Activated naive CD4-positive, alpha-beta T cell treated with anti-CD3 and anti-CD28 coated beads for 36 hours (primary cell): ENCODE measurements at regions of chr6 and their contacts with region 1.

Region 1: GRCh38 chr6:43723737-43724295 is 36.2 kb upstream of the MRPS18A start:
- DNase-seq: peak; percentile 90
- H3K4me3 Mint-ChIP-seq: peak overlapping the region; percentile 72
- H3K27ac Mint-ChIP-seq: no peak overlapping the region
- H3K4me1 Mint-ChIP-seq: peaks cover 23% of the 10 kb centered on the region
- H3K27me3 Mint-ChIP-seq: no peaks in the 10 kb centered on the region

Region 2: DNA sequence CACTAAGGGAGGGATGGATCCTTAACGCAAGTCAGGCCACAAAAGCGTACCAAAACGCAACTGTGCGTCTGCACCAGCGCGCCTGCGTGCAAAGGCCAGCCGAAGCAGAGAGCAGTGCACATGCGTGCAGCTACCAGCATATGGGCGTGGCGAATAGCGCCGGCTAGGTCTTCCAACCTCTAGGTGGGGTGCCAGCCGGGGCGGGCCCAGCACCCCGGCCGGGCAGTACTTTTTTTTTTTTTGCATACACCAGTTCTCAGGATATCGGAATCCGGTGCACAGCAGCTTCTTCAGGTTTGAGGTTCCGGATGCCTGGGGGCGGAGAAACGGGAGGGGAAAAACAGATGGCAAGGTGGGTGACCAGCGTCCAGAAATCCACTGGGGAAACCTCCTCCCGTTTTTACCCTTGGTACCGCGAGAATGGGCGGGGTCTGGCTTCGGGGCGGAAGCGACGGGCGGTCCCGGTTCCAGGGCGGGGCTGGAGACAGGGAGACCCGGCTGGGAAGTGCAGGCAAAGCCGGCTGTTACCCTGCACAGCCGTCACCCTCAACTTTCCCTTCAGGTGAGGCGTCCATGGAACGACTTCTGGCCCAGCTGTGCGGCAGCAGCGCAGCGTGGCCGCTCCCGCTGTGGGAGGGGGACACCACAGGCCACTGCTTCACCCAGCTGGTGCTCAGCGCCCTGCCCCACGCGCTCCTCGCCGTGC is 296.3 kb before region 1 on chr6 and contains the start of gene ABCC10:
- CTCF ChIA-PET with region 1: no interaction called
- intact Hi-C with region 1: no loop called
- DNase-seq: peak; percentile 97
- H3K4me3 Mint-ChIP-seq: peak within 1 kb of the TSS; percentile 87
- H3K27ac Mint-ChIP-seq: peak within 1 kb of the TSS; percentile 86
- H3K4me1 Mint-ChIP-seq: peaks cover 21% of the 10 kb centered on the region
- H3K27me3 Mint-ChIP-seq: no peaks in the 10 kb centered on the region
- total RNA-seq, gene ABCC10: 22.7 to 26.6 TPM

Region 3: GRCh38 chr6:43667245-43668150 is 56.3 kb before region 1 on chr6:
- CTCF ChIA-PET with region 1: interaction called, 5 read pairs
- intact Hi-C with region 1: loop called (anchors 1 kb)
- DNase-seq: peak; percentile 90
- H3K4me3 Mint-ChIP-seq: peak overlapping the region; percentile 5
- H3K27ac Mint-ChIP-seq: peak overlapping the region; percentile 65
- H3K4me1 Mint-ChIP-seq: peaks cover 22% of the 10 kb centered on the region
- H3K27me3 Mint-ChIP-seq: no peaks in the 10 kb centered on the region

Region 4: GRCh38 chr6:43687437-43688347 is 36.1 kb before region 1 on chr6 and contains the start of gene MRPS18A:
- CTCF ChIA-PET with region 1: no interaction called
- intact Hi-C with region 1: loop called (anchors 2 kb)
- DNase-seq: peak; percentile 90
- H3K4me3 Mint-ChIP-seq: peak within 1 kb of the TSS; percentile 92
- H3K27ac Mint-ChIP-seq: peak within 1 kb of the TSS; percentile 81
- H3K4me1 Mint-ChIP-seq: peaks cover 42% of the 10 kb centered on the region
- H3K27me3 Mint-ChIP-seq: peaks cover 3% of the 10 kb centered on the region
- total RNA-seq, gene MRPS18A: 47.8 to 50.2 TPM

Region 5: GRCh38 chr6:43758617-43759050 is 34.8 kb after region 1 on chr6:
- CTCF ChIA-PET with region 1: interaction called, 14 read pairs
- intact Hi-C with region 1: loop called (anchors 1 kb)
- DNase-seq: peak; percentile 62
- H3K4me3 Mint-ChIP-seq: no peak overlapping the region
- H3K27ac Mint-ChIP-seq: no peak overlapping the region
- H3K4me1 Mint-ChIP-seq: peaks cover 3% of the 10 kb centered on the region
- H3K27me3 Mint-ChIP-seq: no peaks in the 10 kb centered on the region

Region 6: DNA sequence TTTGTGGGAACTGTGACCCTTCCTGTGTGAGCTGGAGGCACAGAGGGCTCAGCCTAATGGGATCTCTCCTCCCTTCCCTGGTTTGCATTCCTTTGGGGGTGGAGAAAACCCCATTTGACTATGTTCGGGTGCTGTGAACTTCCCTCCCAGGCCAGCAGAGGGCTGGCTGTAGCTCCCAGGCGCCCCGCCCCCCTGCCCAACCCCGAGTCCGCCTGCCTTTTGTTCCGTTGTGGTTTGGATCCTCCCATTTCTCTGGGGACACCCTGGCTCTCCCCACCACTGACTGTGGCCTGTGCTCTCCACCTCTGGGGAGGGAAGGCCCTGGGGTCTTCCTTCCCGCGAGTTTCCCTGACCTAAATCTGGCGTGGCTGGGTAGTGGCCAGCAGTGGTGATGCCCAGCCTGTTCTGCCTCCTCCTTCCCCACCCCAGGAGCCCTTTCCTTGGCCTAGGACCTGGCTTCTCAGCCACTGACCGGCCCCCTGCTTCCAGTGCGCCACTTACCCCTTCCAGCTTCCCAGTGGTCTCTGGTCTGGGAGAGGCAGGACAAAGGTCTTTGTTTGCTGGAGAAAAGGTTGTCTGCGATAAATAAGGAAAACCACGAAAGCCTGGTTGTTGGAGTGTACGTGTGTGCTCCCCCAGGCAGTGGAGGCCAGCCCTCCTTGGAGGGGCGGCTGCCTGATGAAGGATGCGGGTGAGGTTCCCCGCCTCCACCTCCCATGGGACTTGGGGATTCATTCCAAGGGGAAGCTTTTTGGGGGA is 51.1 kb after region 1 on chr6:
- CTCF ChIA-PET with region 1: interaction called, 28 read pairs
- intact Hi-C with region 1: loop called (anchors 1 kb)
- DNase-seq: peak; percentile 73
- H3K4me3 Mint-ChIP-seq: peak overlapping the region; percentile 18
- H3K27ac Mint-ChIP-seq: no peak overlapping the region
- H3K4me1 Mint-ChIP-seq: peaks cover 29% of the 10 kb centered on the region
- H3K27me3 Mint-ChIP-seq: no peaks in the 10 kb centered on the region

Region 7: DNA sequence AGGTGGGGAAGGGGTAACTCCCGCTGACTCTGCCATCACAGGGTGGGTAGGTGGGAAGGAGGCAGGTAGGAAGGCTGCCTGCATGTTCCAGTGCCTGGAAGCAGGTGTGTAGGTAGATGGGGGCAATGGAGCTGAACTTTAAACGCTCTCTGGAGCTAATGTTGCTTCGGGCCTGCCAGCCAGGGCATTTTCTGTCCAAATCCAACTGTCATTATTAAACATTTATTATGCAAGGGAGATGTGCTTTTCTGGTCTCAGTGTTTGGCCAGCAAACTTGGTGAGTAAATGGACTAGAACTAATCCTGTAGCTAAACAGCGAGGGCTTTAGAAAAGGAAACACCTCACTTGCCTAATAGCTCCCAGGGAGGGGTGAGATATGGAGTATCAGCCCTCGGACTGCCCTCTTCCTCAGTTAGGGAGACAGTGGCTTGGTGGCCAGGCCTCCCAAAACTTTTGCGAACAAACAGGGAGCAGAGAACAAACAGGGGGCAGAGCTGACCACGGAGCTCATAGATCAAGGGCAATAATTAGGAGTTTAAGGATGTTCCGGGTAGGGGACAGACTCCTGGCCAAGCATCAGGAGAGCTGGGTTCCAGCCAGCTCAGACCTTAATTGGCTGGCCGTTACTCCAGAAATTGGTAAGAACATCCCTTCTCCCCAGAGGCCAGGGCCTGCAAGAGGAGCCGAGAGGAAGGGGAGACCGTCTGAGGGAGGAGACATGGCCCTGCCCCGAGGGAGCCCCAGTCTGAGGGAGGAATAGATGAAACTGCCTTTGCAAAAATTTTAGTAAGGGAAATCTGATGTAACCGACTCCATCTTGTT is 177.3 kb after region 1 on chr6:
- CTCF ChIA-PET with region 1: no interaction called
- intact Hi-C with region 1: no loop called
- DNase-seq: no peak
- H3K4me3 Mint-ChIP-seq: no peak overlapping the region
- H3K27ac Mint-ChIP-seq: no peak overlapping the region
- H3K4me1 Mint-ChIP-seq: no peaks in the 10 kb centered on the region
- H3K27me3 Mint-ChIP-seq: no peaks in the 10 kb centered on the region

Region 8: GRCh38 chr6:43951063-43951755 is 227.4 kb after region 1 on chr6:
- CTCF ChIA-PET with region 1: interaction called, 5 read pairs
- intact Hi-C with region 1: loop called (anchors 2 kb)
- DNase-seq: peak; percentile 28
- H3K4me3 Mint-ChIP-seq: no peak overlapping the region
- H3K27ac Mint-ChIP-seq: no peak overlapping the region
- H3K4me1 Mint-ChIP-seq: no peaks in the 10 kb centered on the region
- H3K27me3 Mint-ChIP-seq: peaks cover 4% of the 10 kb centered on the region